Dendritic cell treated with granulocyte-macrophage colony-stimulating factor and Interleukin-4, amounts not matched to agents 40 ng/mL and 50 ng/mL, for 4 days (primary cell): ENCODE measurements at regions of chr9 and their contacts with region 1.

Region 1: DNA sequence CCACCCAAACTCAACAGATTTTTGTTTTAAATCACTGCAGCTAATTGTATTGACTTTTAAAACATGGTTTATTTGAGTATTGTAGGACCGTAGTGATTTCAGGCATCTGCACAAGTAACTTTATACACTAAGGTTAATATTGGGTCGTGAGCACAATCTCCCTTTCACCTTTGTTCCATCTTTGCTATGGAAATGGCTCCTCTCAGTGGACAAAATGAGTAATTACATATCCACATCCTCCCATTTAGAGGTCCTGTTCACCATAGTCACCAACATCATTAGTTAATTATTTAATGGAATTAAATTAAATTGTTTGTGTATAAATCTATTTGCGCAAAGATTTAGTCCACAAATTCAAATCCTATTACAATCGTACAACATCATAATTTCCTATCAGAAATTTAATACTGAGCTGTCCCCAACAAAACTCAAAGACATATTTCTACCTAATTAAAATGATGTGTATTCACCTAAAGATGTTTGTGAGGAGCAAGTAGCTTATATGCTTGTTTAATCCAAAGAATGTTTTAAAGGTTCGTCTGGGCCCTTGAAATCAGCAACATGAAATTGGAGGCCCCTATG is 173.0 kb upstream of the DAPK1 start:
- H3K4me3 Mint-ChIP-seq: no peak overlapping the region
- H3K27ac Mint-ChIP-seq: no peak overlapping the region
- H3K4me1 Mint-ChIP-seq: peaks cover 11% of the 10 kb centered on the region
- H3K27me3 Mint-ChIP-seq: peaks cover 18% of the 10 kb centered on the region

Region 2: DNA sequence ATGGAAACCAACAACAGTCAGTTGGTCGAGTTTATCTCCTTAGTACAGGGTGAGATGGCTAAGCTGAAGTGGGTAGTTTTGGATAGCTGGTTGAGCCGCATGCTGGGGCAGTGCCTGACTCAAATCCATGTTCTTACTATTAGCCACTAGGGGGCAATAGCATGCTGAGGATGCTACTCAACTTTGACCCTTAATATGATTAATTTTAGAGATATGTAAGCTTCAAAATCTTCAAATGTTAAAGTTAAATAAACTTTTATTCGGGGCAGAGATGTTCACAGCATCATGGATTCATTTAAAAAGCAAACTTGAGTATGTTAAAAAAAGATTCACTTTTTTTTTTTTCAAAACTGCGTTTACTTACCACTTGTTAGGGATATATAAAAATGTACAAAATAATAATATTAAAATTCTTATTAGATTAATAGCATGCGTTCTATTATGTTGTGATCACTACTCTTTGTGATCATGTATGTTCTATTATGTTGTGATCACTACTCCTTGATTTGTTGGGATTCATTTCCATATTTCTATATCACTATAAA is 1122.3 kb before region 1 on chr9:
- intact Hi-C with region 1: loop called (anchors 5 kb)
- H3K4me3 Mint-ChIP-seq: no peak overlapping the region
- H3K27ac Mint-ChIP-seq: no peak overlapping the region
- H3K4me1 Mint-ChIP-seq: no peaks in the 10 kb centered on the region
- H3K27me3 Mint-ChIP-seq: peaks cover 5% of the 10 kb centered on the region

Region 3: DNA sequence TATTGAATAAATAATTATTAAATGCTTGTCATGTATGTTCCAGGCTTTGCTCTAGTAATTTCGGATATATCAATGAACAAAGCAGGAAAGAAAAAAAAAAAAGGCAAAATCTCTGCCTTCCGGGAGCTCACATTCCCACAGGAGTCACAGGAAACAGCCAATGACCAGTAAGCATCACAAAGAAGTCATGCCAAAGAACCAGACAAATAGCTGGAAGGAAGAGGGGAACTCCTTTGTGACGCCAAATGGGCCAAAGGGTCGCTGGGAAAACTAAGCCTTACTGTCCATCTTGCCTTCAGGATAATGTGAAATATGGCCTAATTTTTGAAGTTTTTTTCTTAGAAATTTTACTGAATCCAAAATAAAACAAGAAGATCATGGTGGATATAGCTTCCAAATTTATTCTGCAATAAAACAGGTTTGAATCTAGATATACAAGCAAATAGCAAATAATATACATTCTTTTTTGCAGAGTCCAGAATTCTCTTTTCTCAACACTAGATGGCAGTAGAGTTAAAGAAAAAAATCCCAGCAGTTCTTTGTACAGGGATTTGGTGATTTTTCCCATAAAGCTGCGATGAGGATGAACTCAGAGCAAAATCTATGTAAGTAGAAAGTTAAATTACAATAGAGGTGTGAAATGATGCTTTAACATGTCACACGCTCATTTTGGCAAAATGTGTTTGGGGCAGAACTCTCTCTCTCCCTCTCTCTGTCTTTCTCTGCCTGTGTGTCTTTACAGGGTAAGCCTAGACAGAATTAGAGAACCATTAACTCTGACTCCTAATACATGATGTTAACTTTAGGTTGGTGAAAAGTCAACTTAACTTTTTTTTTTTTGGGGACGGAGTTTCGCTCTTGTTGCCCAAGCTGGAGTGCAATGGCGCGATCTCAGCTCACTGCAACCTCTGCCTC is 910.5 kb before region 1 on chr9:
- intact Hi-C with region 1: loop called (anchors 5 kb)
- H3K4me3 Mint-ChIP-seq: no peak overlapping the region
- H3K27ac Mint-ChIP-seq: no peak overlapping the region
- H3K4me1 Mint-ChIP-seq: no peaks in the 10 kb centered on the region
- H3K27me3 Mint-ChIP-seq: peaks cover 24% of the 10 kb centered on the region

Region 4: DNA sequence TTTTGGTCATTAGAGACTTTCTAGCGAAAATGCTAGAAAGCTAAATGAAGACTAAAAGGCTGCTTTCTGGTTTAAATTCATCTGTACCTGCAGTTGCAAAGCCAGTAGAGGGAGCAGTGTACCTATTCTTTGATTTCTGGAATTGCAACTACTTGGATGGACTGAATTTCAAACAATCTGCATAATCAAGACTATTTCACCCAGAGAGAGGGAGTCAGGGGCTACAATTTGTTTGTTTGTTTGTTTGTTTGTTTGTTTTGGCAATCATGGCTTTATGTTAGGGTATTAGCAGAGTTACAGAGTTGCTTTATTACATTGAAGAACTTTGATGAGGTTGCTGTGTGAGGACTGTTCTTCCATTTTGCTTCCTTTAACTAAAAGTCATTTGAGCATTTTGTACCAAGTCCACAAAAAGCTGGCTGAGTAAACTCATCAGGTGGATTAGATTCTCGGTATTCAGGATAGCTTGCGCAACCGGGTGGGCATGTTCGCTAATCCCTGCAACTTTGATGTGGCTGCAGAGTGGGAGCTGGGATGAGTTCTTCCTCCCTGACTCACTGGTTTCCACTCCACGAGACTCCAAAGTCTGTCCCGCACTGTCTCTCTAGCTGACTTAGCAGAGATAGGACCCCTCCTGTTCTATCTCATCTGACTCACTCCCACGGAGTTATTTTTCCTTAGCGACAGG is 890.5 kb before region 1 on chr9:
- intact Hi-C with region 1: loop called (anchors 5 kb)
- H3K4me3 Mint-ChIP-seq: no peak overlapping the region
- H3K27ac Mint-ChIP-seq: no peak overlapping the region
- H3K4me1 Mint-ChIP-seq: no peaks in the 10 kb centered on the region
- H3K27me3 Mint-ChIP-seq: peaks cover 4% of the 10 kb centered on the region

Region 5: DNA sequence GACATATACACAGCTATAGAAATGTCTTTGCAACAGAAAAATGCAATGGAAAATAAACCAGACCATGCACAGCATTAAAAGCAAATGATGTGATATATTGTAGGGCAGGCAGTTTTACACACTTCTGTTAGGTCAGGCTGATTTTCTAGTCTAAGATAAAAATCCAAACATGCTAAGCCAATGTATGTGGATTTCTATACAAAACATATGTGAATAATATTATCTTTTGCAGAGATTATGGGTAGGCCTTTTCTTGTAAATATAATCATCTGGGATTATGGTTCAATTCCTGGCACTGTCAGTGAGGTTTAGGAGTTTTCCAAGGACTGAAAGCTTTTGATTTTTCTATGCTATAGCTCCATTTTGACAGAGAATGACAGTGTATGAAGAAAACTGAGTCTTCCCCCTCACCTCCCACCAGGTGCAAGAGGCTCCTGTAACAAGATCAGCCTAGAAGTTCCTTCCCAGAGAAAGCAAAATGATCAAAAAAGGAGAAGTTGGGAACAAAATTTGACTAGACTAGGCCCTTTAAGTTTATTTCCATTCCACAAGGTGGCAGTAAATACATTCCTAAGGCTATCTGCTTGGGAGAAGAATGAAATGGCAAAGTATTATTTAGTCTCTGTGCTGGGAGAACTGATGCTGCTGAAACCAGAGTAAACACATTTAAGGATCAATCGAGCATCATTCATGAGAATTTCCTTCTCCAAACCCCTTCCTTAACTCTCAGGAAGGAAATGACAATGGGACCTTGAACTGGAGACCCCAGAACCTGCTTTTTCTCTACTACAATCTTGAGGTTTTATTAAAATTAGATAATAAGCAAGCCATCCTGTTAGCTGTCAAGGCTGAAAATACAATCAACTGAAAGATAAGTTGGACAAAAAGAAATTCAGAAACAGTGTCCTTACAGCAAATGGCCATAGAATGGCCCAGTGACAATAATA is 837.5 kb before region 1 on chr9:
- intact Hi-C with region 1: loop called (anchors 1 kb)
- H3K4me3 Mint-ChIP-seq: no peak overlapping the region
- H3K27ac Mint-ChIP-seq: no peak overlapping the region
- H3K4me1 Mint-ChIP-seq: peaks cover 11% of the 10 kb centered on the region
- H3K27me3 Mint-ChIP-seq: peaks cover 3% of the 10 kb centered on the region

Region 6: DNA sequence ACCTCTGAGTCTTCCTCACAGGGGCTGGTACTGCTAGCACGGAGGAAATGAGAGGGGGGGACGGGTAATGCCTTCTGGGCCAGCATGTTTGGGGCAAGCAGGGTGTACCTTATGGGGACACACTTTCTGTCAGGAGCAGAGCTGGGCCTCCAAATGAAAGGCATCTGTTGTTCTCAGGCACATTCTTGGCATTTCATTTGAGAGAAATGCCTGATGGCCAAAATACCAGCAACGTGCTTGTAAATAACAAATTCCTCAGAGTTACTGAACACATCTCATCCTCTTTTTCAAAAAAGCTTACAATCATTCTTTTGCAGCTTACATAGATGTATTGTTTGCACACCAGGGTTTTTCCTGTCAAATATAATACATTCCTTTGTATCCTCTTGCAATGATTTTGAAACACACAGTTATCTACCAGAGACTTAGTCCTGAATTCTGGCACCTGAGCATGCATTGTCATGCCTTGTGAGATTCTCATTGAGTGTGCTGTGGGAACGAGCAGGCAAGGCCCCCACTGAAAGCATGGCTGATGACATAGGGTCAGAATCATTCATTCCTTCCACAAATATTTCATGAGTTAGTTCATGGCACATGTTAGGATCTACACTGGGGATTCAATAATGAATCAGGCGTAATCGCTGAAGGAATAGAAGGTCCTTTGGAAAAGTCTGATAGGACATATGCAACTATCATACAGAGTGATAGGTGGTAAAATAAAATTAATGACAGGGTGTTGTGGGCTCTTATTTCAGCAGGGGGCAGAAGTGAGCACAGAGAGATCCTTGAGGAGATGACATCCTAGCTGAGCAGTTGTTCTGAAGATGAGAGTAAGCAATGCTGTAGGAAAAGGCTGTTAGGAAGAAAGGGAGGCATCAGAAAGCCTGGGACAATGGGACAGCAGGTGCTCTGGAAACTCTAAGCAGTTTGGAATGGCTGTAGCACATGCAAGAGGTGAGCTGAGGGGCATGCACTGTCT is 709.5 kb before region 1 on chr9:
- intact Hi-C with region 1: loop called (anchors 2 kb)
- H3K4me3 Mint-ChIP-seq: no peak overlapping the region
- H3K27ac Mint-ChIP-seq: no peak overlapping the region
- H3K4me1 Mint-ChIP-seq: no peaks in the 10 kb centered on the region
- H3K27me3 Mint-ChIP-seq: no peaks in the 10 kb centered on the region

Region 7: DNA sequence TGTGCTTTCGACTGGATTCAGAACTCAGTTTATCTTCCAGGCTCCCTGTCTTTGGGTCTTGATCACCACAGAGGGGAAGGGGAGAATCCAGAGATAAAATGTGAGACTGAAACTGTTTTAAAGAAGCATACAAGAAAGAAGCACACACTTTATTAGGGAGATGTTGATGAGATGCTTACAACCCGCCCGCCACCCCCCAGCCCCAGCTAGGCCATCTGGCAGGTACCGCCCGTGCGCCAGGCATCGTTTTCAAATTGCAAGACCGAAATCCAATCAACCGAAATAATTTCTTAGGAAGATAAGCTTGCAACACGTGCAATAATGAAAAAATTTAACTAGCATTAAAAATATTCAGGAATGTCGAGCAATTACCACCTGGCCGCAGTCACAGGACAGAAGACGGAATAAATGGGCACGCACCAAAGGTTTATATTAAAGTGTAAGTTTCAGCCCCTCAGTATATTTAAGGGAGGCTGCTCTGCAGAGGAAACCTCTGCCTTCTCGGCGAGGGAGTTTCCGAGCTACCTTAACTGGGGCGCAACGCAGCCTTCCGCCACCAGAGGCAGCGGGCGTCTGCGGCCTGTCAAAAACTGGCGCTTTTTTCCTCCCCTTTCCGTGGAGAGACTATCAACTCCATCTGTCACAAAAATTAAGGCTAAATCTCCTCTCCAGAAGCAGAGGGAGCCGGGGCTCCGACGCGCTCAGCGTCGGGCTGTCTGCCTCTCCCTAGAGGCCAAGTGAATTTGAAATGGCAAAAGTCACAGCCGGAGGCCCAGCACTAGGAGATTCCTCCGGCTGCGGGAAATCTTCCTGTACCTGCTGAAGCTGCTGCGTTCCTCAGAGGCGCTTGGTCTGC is 376.4 kb before region 1 on chr9:
- intact Hi-C with region 1: loop called (anchors 10 kb)
- H3K4me3 Mint-ChIP-seq: peak overlapping the region; percentile 77
- H3K27ac Mint-ChIP-seq: no peak overlapping the region
- H3K4me1 Mint-ChIP-seq: peaks cover 24% of the 10 kb centered on the region
- H3K27me3 Mint-ChIP-seq: peaks cover 48% of the 10 kb centered on the region